IMR-90 (cell line): ENCODE measurements at regions of chr14 and their contacts with region 1.

Region 1: DNA sequence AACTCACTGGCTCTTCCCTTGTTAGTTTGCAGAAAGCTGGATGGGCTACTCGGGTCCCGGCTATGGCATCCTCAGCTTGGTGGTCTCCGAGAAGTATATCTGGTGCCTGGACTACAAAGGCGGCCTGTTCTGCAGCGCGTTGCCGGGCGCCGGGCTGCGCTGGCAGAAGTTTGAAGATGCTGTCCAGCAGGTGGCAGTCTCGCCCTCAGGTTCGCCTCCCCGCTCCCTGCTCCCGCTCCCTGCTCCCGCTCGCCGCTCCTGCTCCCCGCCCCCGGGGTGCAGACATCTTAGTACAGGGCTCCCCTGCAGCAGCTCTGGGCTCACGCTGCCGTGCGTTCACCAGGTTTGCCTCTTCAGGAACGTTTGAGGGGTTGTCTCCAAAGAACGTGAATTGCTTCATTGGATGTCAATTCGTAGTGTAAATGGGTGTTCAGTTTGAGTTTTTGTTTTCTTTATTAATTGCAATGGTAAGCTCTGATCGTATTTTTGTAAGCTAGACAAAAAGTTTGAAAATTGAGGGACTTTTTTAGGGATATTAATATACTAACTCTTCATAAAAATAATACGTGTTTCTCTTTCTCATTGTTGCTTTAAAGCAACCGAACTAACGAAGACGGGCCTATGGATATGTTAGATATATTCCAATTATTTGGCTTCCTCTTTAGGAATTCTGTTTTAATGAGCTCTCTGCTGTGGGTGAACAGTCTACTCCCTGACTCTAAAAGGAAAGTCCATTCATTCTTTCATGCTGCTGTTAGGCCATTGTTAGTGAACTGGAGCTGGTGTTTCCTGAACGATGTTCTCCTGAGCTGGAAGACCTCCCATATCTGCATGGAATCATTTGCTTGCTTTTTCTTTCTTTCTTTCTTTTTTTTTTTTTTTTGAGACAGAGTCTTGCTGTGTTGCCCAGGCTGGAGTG is 71.3 kb downstream of the ANKRD9 start:
- DNase-seq: peak; percentile 75
- ATAC-seq: peak; percentile 100
- H3K4me3 ChIP-seq: no peak overlapping the region
- H3K27ac ChIP-seq: no peak overlapping the region
- H3K4me1 ChIP-seq: no peaks in the 10 kb centered on the region
- H3K27me3 ChIP-seq: no peaks in the 10 kb centered on the region
- CTCF ChIP-seq: peak; percentile 78
- POLR2A ChIP-seq: no peak
- RAD21 ChIP-seq: peak; percentile 88

Region 2: DNA sequence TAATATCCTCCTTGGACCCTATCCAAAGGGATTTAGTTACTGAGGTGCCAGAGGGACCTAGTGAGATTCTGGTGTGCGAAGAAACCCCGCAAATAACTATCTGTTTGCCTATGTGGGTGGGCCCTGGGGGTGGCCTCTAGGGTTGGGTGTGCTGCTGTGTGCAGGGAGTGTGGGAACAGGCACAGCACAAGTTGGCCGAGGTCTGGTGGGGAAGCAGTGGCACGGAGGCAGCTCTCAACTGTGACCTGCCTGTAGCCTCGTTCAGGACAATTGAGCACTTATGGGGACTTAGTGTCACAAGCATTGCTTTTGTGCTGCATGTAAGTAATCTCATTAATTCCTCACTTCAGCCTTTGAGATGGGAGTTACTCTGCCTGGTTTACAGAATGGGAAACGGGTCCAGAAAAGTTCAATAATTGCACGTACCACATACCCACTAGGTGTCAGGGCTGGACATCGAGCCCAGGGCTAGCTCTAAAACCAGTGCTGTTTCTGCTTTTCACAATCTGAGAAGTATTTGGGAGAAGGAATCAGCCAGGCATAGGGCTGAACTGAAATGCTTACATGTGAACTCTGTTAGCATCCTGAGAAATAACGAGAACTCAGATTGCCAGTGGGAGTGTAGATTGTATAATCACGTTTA is 16.7 kb before region 1 on chr14:
- CTCF ChIA-PET with region 1: interaction called, 11 read pairs
- POLR2A ChIA-PET with region 1: no interaction called
- dilution Hi-C with region 1: no loop called
- in situ Hi-C with region 1: no loop called
- intact Hi-C with region 1: no loop called
- DNase-seq: no peak
- ATAC-seq: no peak
- H3K4me3 ChIP-seq: no peak overlapping the region
- H3K27ac ChIP-seq: no peak overlapping the region
- H3K4me1 ChIP-seq: no peaks in the 10 kb centered on the region
- H3K27me3 ChIP-seq: no peaks in the 10 kb centered on the region
- CTCF ChIP-seq: no peak
- POLR2A ChIP-seq: no peak
- RAD21 ChIP-seq: no peak

Region 3: DNA sequence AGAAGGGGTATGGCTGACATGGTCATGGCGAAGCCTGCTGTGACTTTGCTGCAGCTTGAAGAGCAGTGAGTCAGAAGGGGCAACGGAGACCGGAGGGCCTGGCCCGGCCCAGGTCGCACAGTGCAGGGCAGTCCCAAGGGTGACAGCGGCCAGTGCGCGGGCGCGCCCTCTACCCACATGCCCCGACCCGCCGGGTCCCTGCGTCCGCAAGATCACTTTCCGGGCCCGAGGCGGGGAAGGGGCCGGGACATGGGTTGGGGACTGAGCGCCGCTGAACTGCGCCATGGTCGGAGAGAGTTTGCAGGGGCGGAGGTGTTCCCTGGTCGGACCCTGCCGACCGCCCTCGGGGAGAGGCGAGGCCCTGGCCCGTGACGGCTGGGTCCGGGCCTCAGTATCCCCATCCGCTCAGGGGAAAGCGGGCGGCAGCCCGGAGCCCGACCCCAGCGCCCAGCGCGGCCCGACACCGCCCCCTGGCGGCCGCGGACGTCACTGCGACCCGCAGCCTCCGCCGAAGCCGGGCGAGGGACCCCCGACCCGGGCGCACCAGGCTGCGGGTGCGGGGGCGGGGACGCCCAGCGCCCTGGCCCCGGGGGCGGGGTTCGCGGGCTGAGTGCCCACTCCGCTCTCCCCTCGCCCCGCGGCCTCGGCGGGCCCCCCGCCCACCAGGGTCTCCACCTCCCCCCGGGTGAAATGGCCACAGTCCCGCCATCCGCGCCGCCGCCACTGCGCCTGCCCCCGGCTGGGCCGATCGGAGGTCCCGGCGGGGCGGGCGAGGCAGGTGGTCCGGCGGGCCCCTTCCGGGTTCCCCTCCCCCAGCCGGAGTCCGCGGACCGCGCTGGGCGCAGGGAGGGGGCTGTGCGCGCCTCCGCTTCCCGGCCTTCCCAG is 78.5 kb after region 1 on chr14:
- CTCF ChIA-PET with region 1: interaction called, 3 read pairs
- POLR2A ChIA-PET with region 1: no interaction called
- dilution Hi-C with region 1: no loop called
- in situ Hi-C with region 1: loop called (anchors 5 kb)
- intact Hi-C with region 1: loop called (anchors 1 kb)
- DNase-seq: no peak
- ATAC-seq: peak; percentile 97
- H3K4me3 ChIP-seq: peak overlapping the region; percentile 57
- H3K27ac ChIP-seq: peak overlapping the region; percentile 6; the same call in 1 of the 2 replicates
- H3K4me1 ChIP-seq: peaks cover 2% of the 10 kb centered on the region; the same call in 1 of the 2 replicates
- H3K27me3 ChIP-seq: no peaks in the 10 kb centered on the region
- CTCF ChIP-seq: peak; percentile 78
- POLR2A ChIP-seq: no peak
- RAD21 ChIP-seq: peak; percentile 77

Region 4: GRCh38 chr14:102694530-102695166 is 256.4 kb after region 1 on chr14:
- CTCF ChIA-PET with region 1: interaction called, 3 read pairs
- POLR2A ChIA-PET with region 1: no interaction called
- dilution Hi-C with region 1: no loop called
- in situ Hi-C with region 1: no loop called
- intact Hi-C with region 1: loop called (anchors 10 kb)
- DNase-seq: peak; percentile 73
- ATAC-seq: peak; percentile 86
- H3K4me3 ChIP-seq: no peak overlapping the region
- H3K27ac ChIP-seq: no peak overlapping the region
- H3K4me1 ChIP-seq: no peaks in the 10 kb centered on the region; the same call in 1 of the 2 replicates
- H3K27me3 ChIP-seq: no peaks in the 10 kb centered on the region
- CTCF ChIP-seq: peak; percentile 76
- POLR2A ChIP-seq: no peak
- RAD21 ChIP-seq: peak; percentile 75

Region 5: GRCh38 chr14:102717276-102717675 is 279.0 kb after region 1 on chr14:
- CTCF ChIA-PET with region 1: no interaction called
- POLR2A ChIA-PET with region 1: no interaction called
- dilution Hi-C with region 1: no loop called
- in situ Hi-C with region 1: no loop called
- intact Hi-C with region 1: no loop called
- DNase-seq: no peak
- ATAC-seq: no peak
- H3K4me3 ChIP-seq: no peak overlapping the region
- H3K27ac ChIP-seq: no peak overlapping the region
- H3K4me1 ChIP-seq: no peaks in the 10 kb centered on the region
- H3K27me3 ChIP-seq: no peaks in the 10 kb centered on the region
- CTCF ChIP-seq: no peak
- POLR2A ChIP-seq: no peak
- RAD21 ChIP-seq: no peak

Region 6: DNA sequence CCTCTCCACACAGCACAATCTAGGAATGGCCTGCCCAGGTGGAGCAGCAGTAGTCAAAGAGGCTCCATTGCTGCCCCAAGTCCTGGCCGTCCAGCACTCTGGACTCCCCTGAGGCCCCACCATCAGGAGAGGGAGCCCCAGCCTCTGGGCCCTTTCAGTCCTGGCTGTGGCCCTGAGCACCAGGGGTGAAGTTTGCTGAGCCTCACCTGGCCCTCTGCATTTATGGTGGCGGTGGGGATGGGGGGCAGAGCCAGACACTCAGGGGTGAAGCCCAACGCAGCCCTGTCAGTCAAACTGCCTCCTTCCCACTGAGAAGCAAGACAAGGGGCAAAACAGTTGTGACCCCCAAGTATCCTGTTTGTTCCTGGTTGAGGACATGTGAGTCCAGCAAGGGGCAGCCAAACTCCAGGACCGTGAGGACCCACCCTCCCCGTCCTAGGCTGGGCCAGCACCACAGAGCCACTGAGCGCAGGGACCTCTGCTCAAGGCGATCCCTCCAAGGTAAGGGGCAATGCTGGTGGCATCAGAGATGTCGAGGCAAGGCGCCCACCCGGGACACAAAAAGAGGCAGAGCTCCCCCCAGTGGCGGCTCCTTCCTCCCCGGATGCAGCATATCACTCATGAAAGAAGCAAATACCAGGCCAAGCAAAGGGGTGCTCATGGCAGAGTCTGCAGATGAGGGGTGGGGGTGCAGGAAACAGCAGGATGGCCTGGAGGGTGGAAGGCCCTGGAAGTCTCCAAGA is 479.4 kb after region 1 on chr14:
- CTCF ChIA-PET with region 1: no interaction called
- POLR2A ChIA-PET with region 1: no interaction called
- dilution Hi-C with region 1: no loop called
- in situ Hi-C with region 1: no loop called
- intact Hi-C with region 1: loop called (anchors 1 kb)
- DNase-seq: peak; percentile 24
- ATAC-seq: peak; percentile 74
- H3K4me3 ChIP-seq: no peak overlapping the region
- H3K27ac ChIP-seq: no peak overlapping the region
- H3K4me1 ChIP-seq: no peaks in the 10 kb centered on the region
- H3K27me3 ChIP-seq: peaks cover 9% of the 10 kb centered on the region
- CTCF ChIP-seq: peak; percentile 72
- POLR2A ChIP-seq: no peak
- RAD21 ChIP-seq: peak; percentile 74